Activated naive CD4-positive, alpha-beta T cell treated with anti-CD3 and anti-CD28 coated beads, Interleukin-2, amount 10 ng/mL, durations not matched to agents 7 days and 5 days (primary cell): ENCODE measurements at regions of chr12 and their contacts with region 1.

Region 1: GRCh38 chr12:56565510-56566101 is 44.0 kb downstream of the RBMS2 start:
- DNase-seq: peak; percentile 46
- H3K4me3 Mint-ChIP-seq: peak overlapping the region; percentile 6
- H3K27ac Mint-ChIP-seq: peak overlapping the region; percentile 53
- H3K4me1 Mint-ChIP-seq: peaks cover 28% of the 10 kb centered on the region
- H3K27me3 Mint-ChIP-seq: peaks cover 9% of the 10 kb centered on the region

Region 2: DNA sequence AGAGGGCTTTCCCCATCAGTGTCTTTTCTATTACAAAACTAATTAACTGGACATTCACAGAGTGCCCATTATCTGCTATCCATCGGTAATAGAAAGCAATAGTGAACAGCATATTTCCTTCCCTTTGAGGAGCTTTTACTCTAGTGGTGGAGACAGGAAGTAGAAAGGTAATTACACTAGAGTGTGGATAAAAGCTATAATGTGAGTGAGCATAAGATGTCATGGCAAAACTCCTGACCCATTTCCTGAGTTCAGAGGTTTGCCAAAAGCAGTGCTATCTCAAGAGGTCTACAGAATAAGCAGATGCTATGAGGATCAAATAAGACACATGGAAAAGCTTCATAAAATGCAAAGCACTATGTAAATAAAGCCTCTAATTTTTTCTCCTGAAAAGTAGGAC is 140.4 kb before region 1 on chr12:
- CTCF ChIA-PET with region 1: no interaction called
- DNase-seq: no peak
- H3K4me3 Mint-ChIP-seq: no peak overlapping the region
- H3K27ac Mint-ChIP-seq: peak overlapping the region; percentile 0
- H3K4me1 Mint-ChIP-seq: peaks cover 11% of the 10 kb centered on the region
- H3K27me3 Mint-ChIP-seq: no peaks in the 10 kb centered on the region

Region 3: DNA sequence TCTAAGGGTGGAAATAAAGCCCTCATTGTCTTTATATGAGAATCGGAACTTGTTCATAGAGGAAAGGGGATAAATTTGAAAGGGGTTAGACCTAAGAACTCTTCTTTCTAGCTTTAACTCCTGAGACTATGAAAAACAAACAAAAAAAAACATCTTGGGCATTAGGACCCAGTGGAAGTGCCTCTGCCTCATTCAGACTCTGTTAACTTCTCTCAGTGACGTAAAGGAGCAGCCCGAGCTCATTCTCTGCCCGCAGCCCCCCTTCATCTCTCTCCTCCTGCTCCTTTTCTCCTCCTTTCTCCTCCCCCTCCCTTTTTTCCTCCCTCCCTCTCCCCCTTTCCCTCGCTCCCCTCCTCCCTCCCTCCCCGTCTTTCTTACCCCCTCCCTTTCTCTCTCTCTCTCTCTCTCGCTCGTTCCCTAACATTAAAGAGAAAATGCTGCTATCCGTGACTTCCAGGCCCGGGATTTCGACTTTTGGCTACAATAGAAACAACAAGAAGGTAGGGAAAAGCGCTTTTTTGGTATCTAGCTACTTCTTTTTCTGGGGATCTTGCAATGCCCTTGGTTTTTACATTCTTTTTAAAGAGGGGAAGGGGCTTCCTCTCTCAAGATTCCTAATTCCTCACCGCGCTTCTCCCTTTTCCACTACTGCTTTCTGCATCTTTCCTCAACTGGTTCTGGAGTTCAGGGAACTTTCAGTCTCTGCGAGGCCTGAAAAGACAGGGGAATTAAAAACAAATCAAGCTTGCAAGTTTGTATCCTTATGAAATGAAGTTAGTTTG is 43.8 kb before region 1 on chr12 and contains the start of gene RBMS2:
- CTCF ChIA-PET with region 1: interaction called, 14 read pairs
- DNase-seq: peak; percentile 53
- H3K4me3 Mint-ChIP-seq: peak within 1 kb of the TSS; percentile 76
- H3K27ac Mint-ChIP-seq: no peak within 1 kb of the TSS
- H3K4me1 Mint-ChIP-seq: peaks cover 33% of the 10 kb centered on the region
- H3K27me3 Mint-ChIP-seq: peaks cover 12% of the 10 kb centered on the region

Region 4: GRCh38 chr12:56724972-56725722 is 159.5 kb after region 1 on chr12 and contains the start of gene NACA:
- CTCF ChIA-PET with region 1: no interaction called
- DNase-seq: peak; percentile 100
- H3K4me3 Mint-ChIP-seq: peak within 1 kb of the TSS; percentile 99
- H3K27ac Mint-ChIP-seq: peak within 1 kb of the TSS; percentile 98
- H3K4me1 Mint-ChIP-seq: peaks cover 56% of the 10 kb centered on the region
- H3K27me3 Mint-ChIP-seq: no peaks in the 10 kb centered on the region